ENCODE measurements at regions of chr1 and their contacts with region 1.

Region 1: GRCh38 chr1:241640029-241640818 is at the starts of genes CHML and OPN3:
- DNase-seq: peak; percentile 96
- H3K4me3 Mint-ChIP-seq: peak within 1 kb of the TSS; percentile 75
- H3K27ac Mint-ChIP-seq: peak within 1 kb of the TSS; percentile 100
- H3K4me1 Mint-ChIP-seq: peaks cover 56% of the 10 kb centered on the region
- H3K27me3 Mint-ChIP-seq: no peaks in the 10 kb centered on the region
- CTCF ChIP-seq: no peak
- total RNA-seq, gene CHML: 33.7 and 33.8 TPM in 2 replicates
- total RNA-seq, gene OPN3: 45.6 and 56.1 TPM in 2 replicates

Region 2: GRCh38 chr1:241592273-241592958 is 47.8 kb before region 1 on chr1:
- CTCF ChIA-PET with region 1: interaction called, 3 read pairs
- POLR2A ChIA-PET with region 1: interaction called, 23 read pairs
- intact Hi-C with region 1: no loop called
- DNase-seq: peak; percentile 98
- H3K4me3 Mint-ChIP-seq: peak overlapping the region; percentile 7
- H3K27ac Mint-ChIP-seq: peak overlapping the region; percentile 76
- H3K4me1 Mint-ChIP-seq: peaks cover 39% of the 10 kb centered on the region
- H3K27me3 Mint-ChIP-seq: no peaks in the 10 kb centered on the region
- CTCF ChIP-seq: no peak

Region 3: DNA sequence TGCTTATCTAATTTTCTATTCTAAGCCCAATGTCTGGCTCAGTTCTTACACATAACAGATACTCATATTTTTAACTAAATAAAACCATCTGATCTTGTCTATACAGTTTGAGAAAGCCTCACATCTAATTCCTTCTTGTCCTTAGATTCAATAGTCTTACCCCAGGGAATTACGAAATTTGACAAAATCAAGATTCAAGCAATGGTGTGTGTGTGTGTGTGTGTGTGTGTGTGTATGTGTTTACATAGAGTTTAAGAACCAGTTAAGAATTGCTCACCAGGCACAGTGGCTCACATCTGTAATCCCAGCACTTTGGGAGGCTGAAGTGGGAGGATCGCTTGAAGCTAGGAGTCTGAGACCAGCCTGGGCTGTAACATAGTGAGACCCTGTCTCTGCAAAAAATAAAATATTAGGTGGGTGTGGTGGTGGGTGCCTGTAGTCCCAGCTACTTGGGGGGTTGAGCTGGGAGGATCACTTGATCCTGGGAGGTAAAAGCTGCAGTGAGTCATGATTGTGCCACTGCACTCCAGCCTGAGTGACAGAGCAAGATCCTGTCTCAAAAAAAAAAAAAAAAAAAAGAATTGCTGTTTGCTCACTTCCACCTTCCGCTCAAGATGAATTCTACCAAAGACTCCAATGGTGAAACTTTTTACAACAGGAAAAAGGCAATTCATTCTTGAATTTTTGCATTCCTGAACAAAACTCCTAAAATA is 18.0 kb after region 1 on chr1:
- CTCF ChIA-PET with region 1: interaction called, 7 read pairs
- POLR2A ChIA-PET with region 1: interaction called, 19 read pairs
- intact Hi-C with region 1: no loop called
- DNase-seq: peak; percentile 49
- H3K4me3 Mint-ChIP-seq: no peak overlapping the region
- H3K27ac Mint-ChIP-seq: no peak overlapping the region
- H3K4me1 Mint-ChIP-seq: peaks cover 8% of the 10 kb centered on the region
- H3K27me3 Mint-ChIP-seq: no peaks in the 10 kb centered on the region
- CTCF ChIP-seq: no peak

Region 4: DNA sequence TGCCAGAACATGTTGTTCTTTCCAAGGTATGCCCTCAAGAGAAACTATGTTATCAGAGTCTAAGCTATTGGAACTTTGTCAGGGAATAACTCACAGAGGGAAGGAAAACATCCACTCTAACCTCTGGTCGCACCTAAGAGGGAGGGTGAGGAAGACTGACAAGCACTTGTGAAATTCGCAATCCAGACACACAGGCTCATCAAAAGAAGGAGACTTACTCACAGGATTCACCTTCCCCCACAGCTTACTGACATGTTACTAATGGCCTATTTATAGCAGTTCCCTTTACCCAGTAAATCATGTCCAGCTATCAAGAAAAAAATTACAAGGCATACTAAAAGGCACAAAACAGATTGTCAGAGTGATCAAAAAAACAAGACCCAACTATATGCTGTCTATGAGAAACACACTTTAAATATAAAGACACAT is 48.7 kb after region 1 on chr1:
- CTCF ChIA-PET with region 1: interaction called, 13 read pairs
- POLR2A ChIA-PET with region 1: interaction called, 151 read pairs
- intact Hi-C with region 1: loop called (anchors 1 kb)
- DNase-seq: peak; percentile 100
- H3K4me3 Mint-ChIP-seq: peak overlapping the region; percentile 6
- H3K27ac Mint-ChIP-seq: peak overlapping the region; percentile 79
- H3K4me1 Mint-ChIP-seq: peaks cover 23% of the 10 kb centered on the region
- H3K27me3 Mint-ChIP-seq: no peaks in the 10 kb centered on the region
- CTCF ChIP-seq: no peak

Region 5: GRCh38 chr1:241749901-241750695 is 109.9 kb after region 1 on chr1:
- CTCF ChIA-PET with region 1: interaction called, 3 read pairs
- POLR2A ChIA-PET with region 1: interaction called, 27 read pairs
- intact Hi-C with region 1: loop called (anchors 2 kb)
- DNase-seq: no peak
- H3K4me3 Mint-ChIP-seq: peak overlapping the region; percentile 72
- H3K27ac Mint-ChIP-seq: peak overlapping the region; percentile 81
- H3K4me1 Mint-ChIP-seq: peaks cover 16% of the 10 kb centered on the region
- H3K27me3 Mint-ChIP-seq: no peaks in the 10 kb centered on the region
- CTCF ChIP-seq: no peak

Region 6: GRCh38 chr1:241834733-241835377 is 194.6 kb after region 1 on chr1:
- CTCF ChIA-PET with region 1: interaction called, 22 read pairs
- POLR2A ChIA-PET with region 1: interaction called, 11 read pairs
- intact Hi-C with region 1: loop called (anchors 1 kb)
- DNase-seq: peak; percentile 75
- H3K4me3 Mint-ChIP-seq: no peak overlapping the region
- H3K27ac Mint-ChIP-seq: peak overlapping the region; percentile 36
- H3K4me1 Mint-ChIP-seq: peaks cover 22% of the 10 kb centered on the region
- H3K27me3 Mint-ChIP-seq: no peaks in the 10 kb centered on the region
- CTCF ChIP-seq: peak; percentile 98

Region 7: DNA sequence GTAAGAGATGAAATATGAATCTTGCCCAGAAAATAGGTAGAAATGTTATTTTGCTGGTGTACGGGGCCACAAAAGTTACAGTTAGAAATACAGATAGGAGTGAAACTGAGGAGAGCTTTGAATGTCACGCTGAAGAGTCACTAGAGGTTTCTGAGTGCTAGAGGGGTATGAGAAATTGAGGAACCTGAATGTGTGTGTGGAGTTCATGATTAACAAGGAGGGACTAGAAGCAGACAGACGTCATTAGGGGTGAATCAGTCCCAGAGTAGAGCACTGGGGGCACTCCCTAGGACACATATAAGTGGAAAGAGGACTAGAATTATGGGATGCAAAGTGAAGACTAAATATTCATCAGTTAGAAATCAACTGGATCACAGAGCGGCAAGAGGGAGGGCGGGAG is 547.6 kb after region 1 on chr1:
- CTCF ChIA-PET with region 1: no interaction called
- POLR2A ChIA-PET with region 1: no interaction called
- intact Hi-C with region 1: no loop called
- DNase-seq: no peak
- H3K4me3 Mint-ChIP-seq: no peak overlapping the region
- H3K27ac Mint-ChIP-seq: no peak overlapping the region
- H3K4me1 Mint-ChIP-seq: peaks cover 6% of the 10 kb centered on the region
- H3K27me3 Mint-ChIP-seq: no peaks in the 10 kb centered on the region
- CTCF ChIP-seq: no peak